Prostate gland (tissue), 2 donors: ENCODE measurements at regions of chr15 and their contacts with region 1.

Region 1: GRCh38 chr15:78449220-78449999 is 11.4 kb downstream of the IREB2 start:
- DNase-seq: peak; percentile 77
- H3K4me3 ChIP-seq: no peak overlapping the region
- H3K27ac ChIP-seq: peak overlapping the region; percentile 45 to 70
- H3K4me1 ChIP-seq: peaks cover 14% of the 10 kb centered on the region
- H3K27me3 ChIP-seq: no peaks in the 10 kb centered on the region
- CTCF ChIP-seq: no peak
- POLR2A ChIP-seq: no peak

Region 2: GRCh38 chr15:78492872-78493271 is 43.5 kb after region 1 on chr15:
- intact Hi-C with region 1: loop called (anchors 10 kb)
- DNase-seq: no peak
- H3K4me3 ChIP-seq: no peak overlapping the region
- H3K27ac ChIP-seq: no peak overlapping the region
- H3K4me1 ChIP-seq: peaks cover 3% of the 10 kb centered on the region
- H3K27me3 ChIP-seq: no peaks in the 10 kb centered on the region
- CTCF ChIP-seq: no peak
- POLR2A ChIP-seq: no peak